Sciatic nerve (tissue), 2 donors: ENCODE measurements at regions of chr7 and their contacts with region 1.

Region 1: GRCh38 chr7:153130052-153130451 is 370.5 kb downstream of the ACTR3B start:
- DNase-seq: no peak
- ATAC-seq: no peak

Region 2: DNA sequence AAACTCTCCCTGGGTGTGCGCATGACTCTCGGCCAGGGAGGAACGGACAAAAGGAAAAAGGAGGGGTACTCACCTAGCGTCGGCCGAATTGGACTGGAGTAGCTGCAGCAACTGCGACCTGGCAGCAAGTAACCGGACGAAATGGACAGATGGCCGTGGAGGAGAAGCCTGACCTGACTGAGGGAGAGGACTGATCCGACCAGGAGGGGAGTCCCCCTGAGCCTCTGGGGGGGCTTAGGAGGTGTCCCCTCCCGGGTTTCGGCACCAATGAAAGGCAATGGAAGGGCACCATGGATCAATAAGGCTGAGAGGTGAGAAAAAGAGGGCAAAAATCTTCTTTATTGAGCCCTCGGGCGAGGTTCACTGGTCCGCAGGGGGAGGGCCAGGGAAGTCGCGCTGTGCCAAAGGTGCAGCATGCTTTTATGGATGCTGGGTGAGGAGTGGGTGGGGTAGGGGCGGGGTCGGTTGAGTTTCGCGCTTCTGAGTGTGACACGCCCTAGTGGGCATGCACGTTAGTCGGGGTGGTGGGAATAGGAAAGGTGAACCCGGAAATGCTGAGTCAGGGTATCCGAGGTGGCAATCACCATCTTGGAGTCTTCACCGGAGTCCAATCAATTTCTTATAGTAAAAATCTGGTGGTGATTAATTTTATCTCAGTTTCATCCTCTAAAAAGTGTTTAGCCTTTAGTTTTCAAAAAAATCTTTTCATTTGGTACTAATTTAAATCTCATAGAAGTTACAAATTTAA is 283.7 kb after region 1 on chr7:
- intact Hi-C with region 1: loop called (anchors 10 kb)
- DNase-seq: no peak
- ATAC-seq: no peak